ENCODE measurements at regions of chr22 and their contacts with region 1.

Region 1: GRCh38 chr22:50030297-50031188 is 18.0 kb upstream of the IL17REL start:
- DNase-seq: peak; percentile 86
- H3K4me3 Mint-ChIP-seq: no peak overlapping the region
- H3K27ac Mint-ChIP-seq: no peak overlapping the region
- H3K4me1 Mint-ChIP-seq: peaks cover 12% of the 10 kb centered on the region
- H3K27me3 Mint-ChIP-seq: no peaks in the 10 kb centered on the region

Region 2: DNA sequence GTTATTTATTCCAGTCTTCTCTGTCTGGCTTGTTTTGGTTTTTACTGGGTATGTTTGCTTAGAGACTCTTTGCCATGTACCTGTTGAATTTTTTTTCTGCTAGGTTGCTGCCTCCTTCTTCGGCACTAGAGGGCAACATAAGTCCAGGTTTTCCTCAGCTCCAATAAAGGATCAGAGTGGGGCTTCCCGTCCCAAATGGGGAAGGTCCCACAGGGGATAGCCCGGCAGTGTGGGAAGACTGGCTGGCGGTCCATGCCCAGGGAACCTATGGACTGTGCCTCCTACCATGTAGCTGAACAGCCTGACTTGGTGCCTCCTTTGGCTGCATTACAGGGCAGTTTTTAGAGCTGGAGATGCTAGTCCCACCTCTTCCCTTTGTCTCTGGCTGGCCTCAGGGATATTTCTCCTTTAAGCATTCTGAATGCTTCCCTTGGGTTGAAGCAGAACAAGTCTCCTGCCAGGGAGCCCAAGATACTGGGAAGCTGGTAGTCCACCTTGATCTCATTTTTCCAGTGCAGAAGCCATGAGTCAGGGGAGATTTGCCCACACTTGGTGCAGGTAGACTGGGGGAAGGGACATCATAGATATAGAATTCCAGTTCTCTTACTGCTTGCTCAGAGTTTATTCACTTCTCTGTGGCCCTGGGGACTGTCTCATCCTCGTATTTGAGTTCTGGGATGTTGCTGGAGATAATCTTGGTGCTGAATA is 263.0 kb before region 1 on chr22:
- CTCF ChIA-PET with region 1: interaction called, 14 read pairs
- POLR2A ChIA-PET with region 1: no interaction called
- DNase-seq: peak; percentile 47
- H3K4me3 Mint-ChIP-seq: no peak overlapping the region
- H3K27ac Mint-ChIP-seq: no peak overlapping the region
- H3K4me1 Mint-ChIP-seq: peaks cover 4% of the 10 kb centered on the region
- H3K27me3 Mint-ChIP-seq: peaks cover 1% of the 10 kb centered on the region

Region 3: GRCh38 chr22:49930739-49931412 is 99.7 kb before region 1 on chr22:
- CTCF ChIA-PET with region 1: interaction called, 26 read pairs
- POLR2A ChIA-PET with region 1: no interaction called
- DNase-seq: peak; percentile 54
- H3K4me3 Mint-ChIP-seq: no peak overlapping the region
- H3K27ac Mint-ChIP-seq: peak overlapping the region; percentile 42
- H3K4me1 Mint-ChIP-seq: peaks cover 45% of the 10 kb centered on the region
- H3K27me3 Mint-ChIP-seq: no peaks in the 10 kb centered on the region

Region 4: DNA sequence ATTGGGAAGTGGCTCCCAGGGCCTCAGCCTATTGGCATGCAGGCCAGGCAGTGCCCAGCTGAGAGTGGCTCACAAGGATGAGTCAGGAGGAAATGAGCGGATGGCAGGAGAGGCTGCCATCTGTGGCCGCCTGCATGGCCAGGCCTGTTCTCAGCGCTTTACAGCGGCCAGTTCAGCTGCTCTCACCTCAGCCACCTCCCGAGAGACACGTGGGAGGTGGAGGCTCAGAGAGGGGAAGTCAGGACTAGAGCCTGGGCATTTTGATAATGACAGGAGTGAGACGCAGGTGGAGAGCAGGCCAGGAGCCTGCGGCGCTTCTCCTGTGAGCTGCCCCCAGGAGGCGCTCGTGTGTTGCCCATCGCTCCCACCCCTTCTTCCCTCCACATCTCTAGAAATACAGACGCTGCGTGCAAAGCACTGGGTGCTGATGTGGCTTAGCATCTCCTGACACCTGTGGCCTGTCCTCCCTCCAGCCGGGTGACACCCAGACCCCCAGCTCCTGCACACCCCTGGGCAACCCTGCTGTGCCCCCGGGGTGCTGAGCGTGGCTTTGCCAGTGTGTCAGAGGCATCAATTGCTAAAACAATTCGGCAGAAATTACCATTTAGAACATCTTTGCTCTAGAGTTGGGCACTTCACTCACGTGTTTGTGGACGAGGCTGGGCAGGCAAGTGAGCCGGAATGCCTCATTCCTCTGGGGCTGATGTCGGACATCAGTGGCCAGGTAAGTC is 118.6 kb after region 1 on chr22:
- CTCF ChIA-PET with region 1: no interaction called
- POLR2A ChIA-PET with region 1: no interaction called
- DNase-seq: peak; percentile 78
- H3K4me3 Mint-ChIP-seq: no peak overlapping the region
- H3K27ac Mint-ChIP-seq: no peak overlapping the region
- H3K4me1 Mint-ChIP-seq: peaks cover 4% of the 10 kb centered on the region
- H3K27me3 Mint-ChIP-seq: no peaks in the 10 kb centered on the region